ENCODE measurements at regions of chrX and their contacts with region 1.

Region 1: GRCh38 chrX:54182864-54183608 is at the start of gene FAM120C:
- DNase-seq: peak; percentile 38
- H3K4me3 Mint-ChIP-seq: peak within 1 kb of the TSS; percentile 90
- H3K27ac Mint-ChIP-seq: peak within 1 kb of the TSS; percentile 91
- H3K4me1 Mint-ChIP-seq: peaks cover 40% of the 10 kb centered on the region
- H3K27me3 Mint-ChIP-seq: no peaks in the 10 kb centered on the region
- total RNA-seq, gene FAM120C: 10.4 and 11.8 TPM in 2 replicates

Region 2: GRCh38 chrX:53422086-53422860 is 760.8 kb before region 1 on chrX and contains the start of gene SMC1A:
- intact Hi-C with region 1: loop called (anchors 2 kb)
- DNase-seq: peak; percentile 93
- H3K4me3 Mint-ChIP-seq: peak within 1 kb of the TSS; percentile 97
- H3K27ac Mint-ChIP-seq: peak within 1 kb of the TSS; percentile 95
- H3K4me1 Mint-ChIP-seq: peaks cover 35% of the 10 kb centered on the region
- H3K27me3 Mint-ChIP-seq: no peaks in the 10 kb centered on the region
- total RNA-seq, gene SMC1A: 122 and 138 TPM in 2 replicates

Region 3: DNA sequence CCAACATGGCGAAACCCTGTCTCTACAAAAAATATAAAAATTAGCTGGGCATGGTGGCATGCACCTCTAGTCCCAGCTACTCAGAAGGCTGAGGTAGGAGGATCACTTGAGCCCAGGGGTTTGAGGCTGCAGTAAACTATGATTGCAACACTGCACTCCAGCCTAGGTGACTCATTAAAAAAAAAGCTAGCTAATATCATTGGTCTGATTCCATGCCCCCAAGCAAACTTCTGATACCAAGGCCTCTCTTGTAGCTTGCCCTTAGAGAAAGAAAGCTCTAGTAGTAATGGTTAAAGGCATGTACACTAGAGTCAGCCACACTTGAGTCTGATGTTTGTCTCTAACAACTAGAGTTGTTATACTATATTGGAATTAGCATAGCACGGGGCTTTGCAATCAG is 106.1 kb before region 1 on chrX:
- intact Hi-C with region 1: no loop called
- DNase-seq: no peak
- H3K4me3 Mint-ChIP-seq: no peak overlapping the region
- H3K27ac Mint-ChIP-seq: no peak overlapping the region
- H3K4me1 Mint-ChIP-seq: no peaks in the 10 kb centered on the region
- H3K27me3 Mint-ChIP-seq: no peaks in the 10 kb centered on the region

Region 4: GRCh38 chrX:54529552-54530357 is 346.7 kb after region 1 on chrX and contains the start of gene GNL3L:
- intact Hi-C with region 1: loop called (anchors 1 kb)
- DNase-seq: peak; percentile 69
- H3K4me3 Mint-ChIP-seq: peak within 1 kb of the TSS; percentile 95
- H3K27ac Mint-ChIP-seq: peak within 1 kb of the TSS; percentile 94
- H3K4me1 Mint-ChIP-seq: peaks cover 26% of the 10 kb centered on the region
- H3K27me3 Mint-ChIP-seq: no peaks in the 10 kb centered on the region
- total RNA-seq, gene GNL3L: 75.5 and 76.1 TPM in 2 replicates

Region 5: DNA sequence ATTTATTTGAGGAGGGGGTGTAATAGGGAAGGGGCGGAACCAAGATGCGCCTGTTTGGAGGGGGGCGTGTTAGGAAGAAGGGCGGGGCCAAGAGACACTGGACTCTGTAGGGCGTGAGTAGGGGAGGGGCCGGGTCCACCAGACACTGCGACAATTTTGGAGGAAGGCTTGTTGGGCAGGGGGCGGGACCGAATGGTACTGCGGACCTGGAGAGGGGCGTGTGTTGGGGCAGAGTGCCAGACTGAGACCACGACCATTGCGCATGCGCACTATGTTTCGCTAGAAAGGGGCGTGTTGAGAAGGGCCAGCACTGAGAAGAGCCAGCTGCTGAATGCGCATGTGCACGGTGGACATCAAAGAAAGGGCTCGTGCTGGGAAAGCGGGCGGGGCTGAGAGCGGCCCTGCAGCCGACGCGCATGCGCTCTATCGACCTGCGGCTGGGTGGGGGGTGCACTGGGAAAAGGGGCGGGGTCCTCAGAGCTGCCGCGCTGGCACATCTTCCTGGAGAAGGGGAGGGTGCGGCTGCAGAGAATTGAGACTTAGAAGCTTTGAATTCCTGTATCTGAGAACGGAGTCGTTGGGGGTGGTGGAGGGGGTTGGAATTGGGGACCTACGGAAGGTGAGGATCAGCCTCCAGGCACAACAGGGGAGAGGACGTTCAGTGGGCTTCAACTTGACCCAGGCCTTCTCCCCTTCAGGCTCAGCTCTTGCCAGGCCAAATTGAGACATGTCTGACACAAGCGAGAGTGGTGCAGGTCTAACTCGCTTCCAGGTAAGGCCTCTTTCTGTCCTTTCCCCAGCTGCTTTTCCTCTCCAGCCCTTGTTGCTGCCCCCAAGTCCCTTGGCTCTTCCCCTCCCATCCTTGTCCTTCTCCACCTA is 625.8 kb after region 1 on chrX:
- intact Hi-C with region 1: loop called (anchors 1 kb)
- DNase-seq: peak; percentile 88
- H3K4me3 Mint-ChIP-seq: peak overlapping the region; percentile 89
- H3K27ac Mint-ChIP-seq: peak overlapping the region; percentile 85
- H3K4me1 Mint-ChIP-seq: peaks cover 17% of the 10 kb centered on the region
- H3K27me3 Mint-ChIP-seq: peaks cover 10% of the 10 kb centered on the region

Measured in activated T-helper 1 cell treated with anti-CD3 and anti-CD28 coated beads, Interleukin-12 subunit alpha, Interleukin-12 subunit beta, Interleukin-2, Interleukin-4 antibody, amounts not matched to agents 30 ng/mL and 10 ng/mL and 1 ng/mL, durations not matched to agents 14 hours and 24 hours and 36 hours (primary cell).